ENCODE measurements at regions of chr7 and their contacts with region 1.

Region 1: DNA sequence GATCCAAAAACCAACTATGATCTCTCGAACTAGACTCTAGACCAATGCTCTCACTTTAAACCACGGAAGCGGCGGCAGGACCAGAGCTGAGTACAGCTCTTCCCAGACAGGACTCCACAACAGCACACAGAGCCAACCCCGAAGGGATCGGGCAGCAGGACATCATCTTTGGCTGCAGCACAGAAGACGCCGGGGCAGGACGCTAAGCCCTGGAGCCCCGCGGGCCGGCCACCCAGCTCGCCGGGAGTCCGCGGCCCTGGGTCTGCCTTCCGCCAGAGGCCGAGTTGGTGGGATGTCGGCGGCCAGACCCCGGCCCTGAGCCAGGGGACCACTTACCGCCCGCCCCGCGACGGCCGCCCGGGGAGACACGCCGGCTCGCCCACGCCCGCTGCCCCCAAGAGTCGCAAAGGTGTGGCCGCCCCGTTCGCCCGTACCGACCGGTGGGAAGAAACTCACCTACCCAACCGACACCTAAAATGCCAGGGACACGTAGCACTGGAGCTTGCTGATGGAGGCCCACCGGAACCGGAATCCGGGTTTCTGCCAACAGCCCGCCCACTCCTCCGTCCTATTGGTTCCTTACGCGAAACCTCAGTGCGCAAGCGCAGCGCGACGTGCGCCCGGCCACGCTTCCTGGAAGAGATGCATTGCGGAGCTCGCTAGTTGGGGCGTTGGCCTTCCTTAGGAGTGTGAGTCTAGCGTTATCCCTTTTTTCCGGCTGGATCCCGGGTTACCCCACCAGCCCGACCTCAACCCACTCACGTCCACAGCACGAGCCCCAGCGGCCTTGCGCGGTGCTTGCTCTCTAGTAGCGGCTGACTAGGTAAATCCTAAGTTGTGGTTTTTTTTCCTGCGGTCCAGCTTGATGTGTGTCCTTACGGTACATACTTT is at the start of gene SEC61G:
- DNase-seq: peak; percentile 98
- ATAC-seq: peak; percentile 96
- H3K4me3 ChIP-seq: peak within 1 kb of the TSS; percentile 94
- H3K27ac ChIP-seq: peak within 1 kb of the TSS; percentile 43
- H3K4me1 ChIP-seq: peaks cover 15% of the 10 kb centered on the region; the same call in 1 of the 2 replicates
- H3K27me3 ChIP-seq: no peaks in the 10 kb centered on the region
- CTCF ChIP-seq: no peak
- total RNA-seq, gene SEC61G: 128 and 177 TPM in 2 replicates

Region 2: DNA sequence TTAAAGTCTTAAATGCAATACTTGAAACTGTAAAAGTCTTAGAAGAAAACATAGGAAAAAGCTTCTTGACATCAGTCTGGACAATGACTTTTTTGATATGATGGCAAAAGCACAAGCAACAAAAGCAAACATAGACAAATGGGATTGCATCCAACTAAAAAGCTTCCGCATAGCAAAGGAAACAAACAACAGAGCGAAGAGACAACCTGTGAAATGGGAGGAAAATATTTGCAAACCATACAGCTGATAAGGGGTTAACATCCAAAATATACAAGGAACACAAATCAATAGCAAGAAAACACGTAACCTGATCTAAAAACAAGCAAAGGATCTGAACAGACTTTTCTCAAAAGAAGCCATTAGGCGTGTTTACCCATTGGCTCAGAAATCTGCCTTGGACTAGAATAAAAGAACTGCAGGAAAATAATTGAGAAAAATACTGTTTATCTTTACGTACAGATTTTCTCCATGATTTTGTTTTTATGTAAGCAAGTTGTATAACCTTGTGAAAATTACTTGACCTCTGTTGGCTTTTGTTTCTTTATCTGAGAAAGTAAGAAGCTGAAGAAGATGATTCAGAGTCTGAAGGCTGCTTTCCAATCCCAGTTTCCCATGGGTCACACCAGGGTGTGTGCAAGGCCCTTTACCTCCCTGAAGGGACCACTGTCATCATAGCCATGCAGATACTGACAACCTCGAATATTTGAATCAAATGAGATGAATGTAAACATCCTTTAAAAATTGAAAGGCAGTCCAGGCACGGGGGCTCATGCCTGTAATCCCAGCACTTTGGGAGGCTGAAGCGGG is 507.1 kb after region 1 on chr7:
- CTCF ChIA-PET with region 1: interaction called, 3 read pairs
- POLR2A ChIA-PET with region 1: interaction called, 14 read pairs
- intact Hi-C with region 1: no loop called
- DNase-seq: no peak
- ATAC-seq: no peak
- H3K4me3 ChIP-seq: no peak overlapping the region
- H3K27ac ChIP-seq: no peak overlapping the region
- H3K4me1 ChIP-seq: no peaks in the 10 kb centered on the region
- H3K27me3 ChIP-seq: no peaks in the 10 kb centered on the region
- CTCF ChIP-seq: no peak

Measured in PC-3 (cell line).